ENCODE measurements at regions of chr10 and their contacts with region 1.

Region 1: DNA sequence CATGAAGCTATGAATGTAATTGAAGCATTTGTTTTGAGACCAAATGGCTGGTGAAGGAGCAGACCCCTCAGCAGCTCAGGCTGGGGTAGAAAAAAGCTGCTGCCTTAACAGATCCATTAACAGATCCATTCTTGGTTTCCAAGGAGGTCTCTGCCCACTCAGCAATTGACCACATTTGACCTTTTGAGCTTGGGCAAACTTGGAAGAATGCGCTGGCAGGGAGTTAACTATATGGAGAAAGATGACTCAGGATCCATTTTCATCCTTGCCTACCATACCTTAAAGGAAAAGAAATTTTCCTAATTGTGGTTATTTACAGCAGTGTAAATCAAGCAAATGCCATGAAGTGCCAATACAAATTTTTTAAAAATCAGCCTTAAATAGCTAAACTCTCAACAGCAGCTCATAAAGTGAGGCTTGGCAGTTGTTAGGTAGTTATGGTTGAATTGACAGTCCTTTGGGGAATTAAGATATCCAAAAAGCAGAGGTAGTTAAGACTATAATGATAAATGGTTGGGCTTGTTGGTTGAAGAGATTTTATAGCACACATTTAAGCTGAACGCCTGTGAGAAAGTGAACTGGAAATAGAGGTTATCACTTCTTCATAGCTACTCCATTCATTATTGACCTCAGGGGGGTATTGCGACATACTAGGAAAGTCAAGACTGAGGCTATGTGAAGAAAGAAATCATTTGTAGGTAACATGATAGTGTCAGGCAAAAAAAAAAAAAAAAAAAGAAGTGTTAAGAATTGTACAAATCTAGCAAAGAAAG is 83.9 kb downstream of the MKX start:
- DNase-seq: no peak
- ATAC-seq: no peak
- H3K4me3 ChIP-seq: no peak overlapping the region
- H3K27ac ChIP-seq: no peak overlapping the region
- H3K4me1 ChIP-seq: peaks cover 0 to 25% (median 0%) of the 10 kb centered on the region in 12 donors
- H3K27me3 ChIP-seq: no peaks in the 10 kb centered on the region
- CTCF ChIP-seq: no peak
- POLR2A ChIP-seq: no peak

Region 2: DNA sequence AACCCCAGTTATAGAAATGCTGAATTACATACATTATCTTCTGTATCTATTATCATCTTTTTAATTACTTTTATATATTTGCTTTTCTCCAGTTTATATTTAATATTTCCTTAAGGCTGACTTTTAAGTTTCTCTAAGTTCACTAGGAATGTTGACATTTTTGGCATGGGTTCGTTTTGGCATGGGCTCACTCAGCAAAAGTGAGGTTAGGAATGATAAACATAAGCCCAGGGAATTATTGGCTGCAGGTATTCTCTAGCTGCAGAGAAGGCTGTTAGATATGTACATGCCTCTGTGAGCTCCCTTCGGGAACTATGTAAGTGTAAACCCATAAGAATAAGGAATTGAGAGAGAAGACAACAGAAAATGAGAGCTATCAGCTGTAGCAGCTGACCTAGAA is 221.2 kb before region 1 on chr10:
- intact Hi-C with region 1: loop called in 8 of 10 experiments (anchors 5 to 10 kb)
- DNase-seq: no peak
- ATAC-seq: no peak
- H3K4me3 ChIP-seq: no peak overlapping the region
- H3K27ac ChIP-seq: no peak overlapping the region
- H3K4me1 ChIP-seq: no peaks in the 10 kb centered on the region
- H3K27me3 ChIP-seq: no peaks in the 10 kb centered on the region
- CTCF ChIP-seq: no peak
- POLR2A ChIP-seq: no peak

Measured in heart left ventricle (tissue), 16 donors.